Head of caudate nucleus (tissue), 42 donors: ENCODE measurements at regions of chr7 and their contacts with region 1.

Region 1: DNA sequence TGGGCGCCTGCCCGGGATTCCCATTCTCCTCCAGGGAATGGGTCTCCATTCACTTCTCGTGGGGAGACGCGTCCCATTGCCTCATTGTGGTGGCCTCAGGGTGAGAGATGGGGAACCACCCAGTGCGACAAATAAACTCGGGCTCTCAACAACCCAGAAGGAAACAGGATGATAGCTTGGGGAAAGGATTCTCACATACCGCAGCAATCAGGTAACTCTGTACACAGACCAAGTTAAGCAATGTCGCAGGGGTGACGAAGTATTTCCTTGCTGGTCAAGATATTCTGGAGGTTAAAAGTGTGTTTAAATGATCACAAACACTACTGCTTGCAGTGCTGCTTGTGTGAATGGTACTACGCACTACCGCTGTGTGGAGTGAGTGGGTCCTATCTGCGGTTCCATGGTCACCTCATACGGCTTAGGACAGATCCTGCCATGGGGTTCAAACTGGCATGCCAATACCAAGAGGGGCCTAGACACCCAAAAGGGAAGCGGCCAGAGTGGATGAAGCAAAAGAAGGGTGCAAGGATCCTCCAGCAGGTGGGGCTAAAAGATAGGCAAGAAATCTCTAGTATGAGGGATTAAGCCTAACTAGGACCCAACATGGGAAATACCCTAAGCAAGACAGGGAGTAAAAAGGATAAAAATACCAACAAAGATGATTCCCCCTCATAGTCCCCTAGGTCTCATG is 143.8 kb upstream of the TMEM106B start:
- DNase-seq: peak in 38 of 42 donors; percentile 3 to 82 (median 54)

Region 2: DNA sequence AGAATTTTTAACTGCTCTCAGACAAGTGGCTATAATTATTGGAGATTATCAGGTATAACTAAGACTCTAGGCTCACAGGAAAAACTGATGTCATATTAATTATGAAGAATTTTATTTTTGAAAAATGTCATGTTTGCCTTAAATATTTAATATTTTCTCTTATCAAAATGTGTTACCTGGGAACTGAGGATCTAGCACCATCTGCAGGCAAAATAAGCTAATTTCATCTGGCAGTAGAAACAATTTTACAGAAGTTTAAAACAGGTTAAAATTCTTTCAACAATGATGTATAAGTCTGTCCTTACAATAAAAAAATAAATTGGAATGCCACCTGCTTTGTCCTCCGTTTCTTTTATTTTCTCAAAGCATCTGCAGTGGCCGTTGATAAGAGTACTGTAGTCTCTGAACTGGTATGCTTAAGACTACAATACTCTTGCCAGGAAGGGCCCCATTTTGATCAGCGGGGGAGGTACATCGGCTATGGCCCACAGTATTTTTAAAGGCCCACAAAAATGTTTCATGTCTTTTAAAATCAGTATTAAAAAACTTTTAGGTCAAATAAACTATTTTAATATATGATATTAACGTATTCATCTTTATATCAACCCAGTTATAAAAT is 255.1 kb after region 1 on chr7:
- intact Hi-C with region 1: loop called (anchors 5 kb)
- DNase-seq: peak in 6 of 42 donors; percentile 4 to 28 (median 16)